ENCODE measurements at regions of chr1 and their contacts with region 1.

Region 1: DNA sequence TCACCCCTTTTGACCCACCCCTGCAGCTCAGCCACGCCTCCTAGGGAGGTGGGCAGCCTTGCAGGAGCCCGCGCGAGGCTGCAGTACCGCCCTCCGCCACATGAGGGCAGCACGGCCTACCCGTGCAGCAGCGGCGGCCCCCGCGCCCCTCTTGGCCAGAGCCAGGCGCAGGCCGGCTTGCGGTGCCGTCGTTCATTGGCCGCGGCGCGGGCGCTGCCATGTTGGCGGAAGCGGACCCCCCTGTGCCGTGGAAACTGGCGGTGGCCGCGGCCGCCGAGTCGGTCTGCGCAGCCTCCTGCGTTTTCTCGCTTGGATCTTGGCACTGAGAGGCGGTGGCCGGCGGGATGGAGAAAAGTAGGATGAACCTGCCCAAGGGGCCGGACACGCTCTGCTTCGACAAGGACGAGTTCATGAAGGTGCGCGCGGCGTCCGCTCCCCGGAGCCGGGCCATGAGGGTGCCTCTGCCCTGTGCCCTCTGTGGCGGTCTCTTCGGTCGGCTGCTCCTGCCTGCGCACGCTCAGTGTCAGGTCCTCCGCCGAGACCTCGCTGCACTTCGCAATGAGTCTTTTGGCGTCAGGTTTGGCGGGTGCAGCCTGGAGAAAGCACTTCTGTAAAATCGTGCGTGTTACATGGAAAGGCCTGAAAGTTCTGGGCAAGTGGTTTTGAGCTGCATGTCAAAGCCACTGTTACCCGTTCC is at the start of gene COG2:
- DNase-seq: peak; percentile 97
- H3K4me3 Mint-ChIP-seq: peak within 1 kb of the TSS; percentile 96
- H3K27ac Mint-ChIP-seq: peak within 1 kb of the TSS; percentile 83
- H3K4me1 Mint-ChIP-seq: peaks cover 23% of the 10 kb centered on the region
- H3K27me3 Mint-ChIP-seq: peaks cover 26% of the 10 kb centered on the region
- CTCF ChIP-seq: peak; percentile 100
- total RNA-seq, gene COG2: 39.5 and 46.7 TPM in 2 replicates

Region 2: DNA sequence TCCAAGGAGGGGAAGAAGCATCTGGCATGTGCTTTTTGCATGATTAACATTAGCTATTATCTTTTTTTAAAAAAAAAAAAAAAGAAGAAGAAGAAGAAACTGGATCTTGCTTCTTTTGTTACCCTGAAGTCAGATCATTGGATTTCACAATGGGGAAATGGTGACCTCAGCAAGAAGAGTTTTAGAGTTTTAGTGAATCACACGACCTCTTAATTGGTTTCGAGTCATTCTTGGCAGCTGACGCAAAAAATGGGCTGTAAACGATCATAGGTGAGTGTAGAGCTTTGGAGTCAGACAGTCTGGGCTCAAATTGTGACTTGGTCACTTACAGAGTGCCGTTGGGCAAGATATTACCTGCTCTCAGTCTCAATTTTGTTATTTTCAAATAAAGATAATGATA is 182.9 kb before region 1 on chr1:
- CTCF ChIA-PET with region 1: interaction called, 5 read pairs
- POLR2A ChIA-PET with region 1: interaction called, 18 read pairs
- intact Hi-C with region 1: no loop called
- DNase-seq: peak; percentile 100
- H3K4me3 Mint-ChIP-seq: no peak overlapping the region
- H3K27ac Mint-ChIP-seq: peak overlapping the region; percentile 75
- H3K4me1 Mint-ChIP-seq: peaks cover 26% of the 10 kb centered on the region
- H3K27me3 Mint-ChIP-seq: no peaks in the 10 kb centered on the region
- CTCF ChIP-seq: no peak

Region 3: DNA sequence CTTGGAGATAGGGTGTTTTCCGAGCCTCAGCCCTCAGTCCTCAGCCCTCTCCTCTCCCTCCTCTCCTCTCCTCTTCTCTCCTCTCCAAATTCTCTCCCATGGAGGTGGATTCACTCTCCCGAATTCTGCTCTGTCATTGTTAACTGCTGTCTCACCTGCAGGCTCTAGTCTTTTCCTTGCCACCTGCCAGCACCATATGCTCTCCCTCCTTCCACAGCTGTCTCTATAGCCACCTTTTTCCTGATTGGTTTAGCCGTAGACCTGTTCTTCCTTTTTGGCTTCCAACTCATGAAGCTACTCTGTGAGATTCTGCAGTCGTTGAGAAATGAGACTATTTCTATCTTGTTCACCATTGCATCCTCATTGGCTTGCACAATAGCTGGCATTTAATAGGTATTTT is 19.6 kb after region 1 on chr1:
- CTCF ChIA-PET with region 1: interaction called, 11 read pairs
- POLR2A ChIA-PET with region 1: interaction called, 24 read pairs
- intact Hi-C with region 1: no loop called
- DNase-seq: peak; percentile 39
- H3K4me3 Mint-ChIP-seq: no peak overlapping the region
- H3K27ac Mint-ChIP-seq: peak overlapping the region; percentile 1
- H3K4me1 Mint-ChIP-seq: peaks cover 6% of the 10 kb centered on the region
- H3K27me3 Mint-ChIP-seq: no peaks in the 10 kb centered on the region
- CTCF ChIP-seq: no peak

Region 4: GRCh38 chr1:230681599-230681998 is 39.2 kb after region 1 on chr1:
- CTCF ChIA-PET with region 1: interaction called, 13 read pairs
- POLR2A ChIA-PET with region 1: interaction called, 31 read pairs
- intact Hi-C with region 1: loop called (anchors 2 kb)
- DNase-seq: peak; percentile 97
- H3K4me3 Mint-ChIP-seq: no peak overlapping the region
- H3K27ac Mint-ChIP-seq: peak overlapping the region; percentile 4
- H3K4me1 Mint-ChIP-seq: peaks cover 24% of the 10 kb centered on the region
- H3K27me3 Mint-ChIP-seq: no peaks in the 10 kb centered on the region
- CTCF ChIP-seq: no peak

Region 5: DNA sequence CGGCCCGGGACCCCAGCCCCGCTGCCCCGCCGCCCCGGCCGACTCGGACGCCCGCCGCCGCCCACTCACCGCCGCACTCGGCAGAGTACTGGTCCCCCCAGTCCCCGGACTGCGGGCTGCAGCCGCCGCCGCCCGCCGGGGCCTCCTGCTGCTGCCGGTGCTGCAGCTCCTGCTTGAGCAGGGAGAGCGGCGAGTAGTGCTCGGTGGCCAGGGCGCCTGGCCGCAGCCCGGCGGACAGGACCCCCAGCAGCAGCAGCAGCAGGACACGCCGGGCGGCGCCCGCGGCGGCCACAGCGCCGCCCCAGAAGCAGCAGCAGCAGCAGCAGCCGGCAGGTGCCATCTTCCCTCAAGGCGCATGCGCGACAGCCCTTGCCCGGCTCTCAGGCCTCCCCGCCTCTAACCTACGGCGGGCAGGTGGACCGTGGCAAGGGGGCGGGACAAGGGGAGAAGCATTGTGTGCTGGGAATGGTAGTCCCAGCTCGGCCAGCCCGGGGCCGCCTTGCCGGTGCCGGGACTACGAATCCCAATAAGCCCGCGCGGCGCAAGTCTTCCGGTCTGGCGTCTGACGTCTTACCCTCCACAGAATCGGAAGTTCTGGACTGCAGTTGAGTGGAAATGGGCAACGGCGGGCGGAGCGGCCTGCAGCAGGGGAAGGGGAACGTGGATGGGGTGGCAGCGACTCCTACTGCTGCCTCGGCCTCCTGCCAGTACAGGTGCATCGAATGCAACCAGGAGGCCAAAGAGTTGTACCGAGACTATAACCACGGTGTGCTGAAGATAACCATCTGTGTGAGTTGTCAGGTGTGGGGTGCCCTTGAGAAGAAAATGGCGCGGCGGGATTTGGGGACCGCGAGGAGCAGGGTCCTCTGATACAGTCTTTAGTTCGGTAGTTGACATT is 336.3 kb after region 1 on chr1 and contains the starts of genes ARV1 and TTC13:
- CTCF ChIA-PET with region 1: no interaction called
- POLR2A ChIA-PET with region 1: interaction called, 4 read pairs
- intact Hi-C with region 1: loop called (anchors 2 kb)
- DNase-seq: peak; percentile 100
- H3K4me3 Mint-ChIP-seq: no peak within 1 kb of the TSS
- H3K27ac Mint-ChIP-seq: peak within 1 kb of the TSS; percentile 83
- H3K4me1 Mint-ChIP-seq: peaks cover 7% of the 10 kb centered on the region
- H3K27me3 Mint-ChIP-seq: no peaks in the 10 kb centered on the region
- CTCF ChIP-seq: peak; percentile 15
- total RNA-seq, gene ARV1: 41.8 and 51.8 TPM in 2 replicates
- total RNA-seq, gene TTC13: 29.9 and 35.2 TPM in 2 replicates

Measured in MCF 10A (cell line).